Transverse colon (tissue), 4 donors: ENCODE measurements at regions of chr1 and their contacts with region 1.

Region 1: GRCh38 chr1:185373813-185374529 is 56.9 kb upstream of the IVNS1ABP start:
- DNase-seq: no peak
- H3K4me3 ChIP-seq: no peak overlapping the region
- H3K27ac ChIP-seq: no peak overlapping the region
- H3K4me1 ChIP-seq: peaks cover 0 to 5% (median 0%) of the 10 kb centered on the region in 4 donors
- H3K27me3 ChIP-seq: no peaks in the 10 kb centered on the region
- CTCF ChIP-seq: no peak
- EP300 ChIP-seq: no peak
- POLR2A ChIP-seq: no peak

Region 2: GRCh38 chr1:184101141-184101540 is 1272.8 kb before region 1 on chr1:
- in situ Hi-C with region 1: no loop called
- intact Hi-C with region 1: loop called (anchors 5 kb)
- DNase-seq: no peak
- H3K4me3 ChIP-seq: no peak overlapping the region
- H3K27ac ChIP-seq: no peak overlapping the region
- H3K4me1 ChIP-seq: no peaks in the 10 kb centered on the region
- H3K27me3 ChIP-seq: no peaks in the 10 kb centered on the region
- CTCF ChIP-seq: no peak
- EP300 ChIP-seq: no peak
- POLR2A ChIP-seq: no peak

Region 3: DNA sequence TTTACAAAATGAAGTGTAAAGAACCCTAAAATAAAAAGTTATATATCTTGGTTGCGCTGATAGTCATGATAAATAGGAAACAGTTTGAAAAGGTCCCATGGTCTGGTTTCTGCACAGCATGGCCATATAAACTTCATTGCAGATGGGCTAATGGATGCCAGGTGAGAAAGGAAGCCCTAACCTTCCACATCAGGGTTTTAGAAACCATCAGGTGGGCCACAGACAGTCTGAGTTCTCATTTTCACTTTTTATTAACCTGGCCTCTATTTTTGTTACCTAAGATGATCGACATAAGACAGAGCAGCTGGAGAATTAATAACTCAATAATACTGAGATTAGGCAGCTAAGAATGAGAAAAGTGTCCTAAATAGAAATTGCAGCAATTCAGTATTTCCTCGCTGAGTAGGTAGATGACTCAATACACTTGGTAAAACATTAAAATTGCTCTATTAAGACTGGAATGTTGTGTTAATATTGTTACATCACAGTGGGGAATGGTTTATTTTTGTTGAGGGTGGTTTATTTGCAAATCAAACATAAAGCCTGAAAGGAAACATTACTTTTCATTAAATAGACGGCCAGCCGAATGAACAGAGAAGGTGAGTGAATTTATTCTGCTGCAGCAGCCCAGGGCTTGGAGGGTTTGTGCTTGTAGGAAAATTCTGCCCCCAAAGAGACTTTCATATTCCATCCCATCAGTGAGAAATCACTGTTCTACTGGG is 966.0 kb before region 1 on chr1:
- in situ Hi-C with region 1: no loop called
- intact Hi-C with region 1: no loop called
- DNase-seq: no peak
- H3K4me3 ChIP-seq: no peak overlapping the region
- H3K27ac ChIP-seq: peak overlapping the region in 1 of 4 donors; percentile 16
- H3K4me1 ChIP-seq: peaks cover 4 to 52% (median 17%) of the 10 kb centered on the region in 4 donors
- H3K27me3 ChIP-seq: no peaks in the 10 kb centered on the region
- CTCF ChIP-seq: no peak
- EP300 ChIP-seq: no peak
- POLR2A ChIP-seq: no peak

Region 4: DNA sequence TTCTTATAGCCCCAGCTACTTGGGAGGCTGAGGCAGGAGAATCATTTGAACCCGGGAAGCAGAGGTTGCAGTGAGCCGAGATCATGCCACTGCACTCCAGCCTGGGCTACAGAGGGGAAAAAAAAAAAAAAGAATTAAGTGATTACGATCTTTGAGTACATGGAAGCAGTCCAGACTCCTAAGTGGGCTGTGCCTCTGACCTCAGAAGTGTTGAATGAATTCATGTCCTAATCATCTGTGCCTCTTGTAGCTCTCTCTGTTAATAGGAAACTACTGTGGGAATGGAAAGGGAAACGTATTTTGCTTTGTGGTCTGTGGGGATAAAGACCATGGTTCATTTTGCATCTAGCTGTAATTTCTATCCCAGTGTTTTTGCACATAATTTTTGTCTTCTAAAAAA is 48.6 kb before region 1 on chr1:
- in situ Hi-C with region 1: no loop called
- intact Hi-C with region 1: no loop called
- DNase-seq: no peak
- H3K4me3 ChIP-seq: no peak overlapping the region
- H3K27ac ChIP-seq: no peak overlapping the region
- H3K4me1 ChIP-seq: no peaks in the 10 kb centered on the region
- H3K27me3 ChIP-seq: no peaks in the 10 kb centered on the region
- CTCF ChIP-seq: no peak
- EP300 ChIP-seq: no peak
- POLR2A ChIP-seq: no peak